OCI-LY7 (cell line): ENCODE measurements at regions of chr17 and their contacts with region 1.

Region 1: GRCh38 chr17:38735161-38735997 is 5.2 kb downstream of the CISD3 start:
- DNase-seq: peak; percentile 67
- H3K4me3 ChIP-seq: no peak overlapping the region
- H3K27ac ChIP-seq: no peak overlapping the region
- H3K4me1 ChIP-seq: peaks cover 48% of the 10 kb centered on the region
- CTCF ChIP-seq: peak; percentile 91

Region 2: DNA sequence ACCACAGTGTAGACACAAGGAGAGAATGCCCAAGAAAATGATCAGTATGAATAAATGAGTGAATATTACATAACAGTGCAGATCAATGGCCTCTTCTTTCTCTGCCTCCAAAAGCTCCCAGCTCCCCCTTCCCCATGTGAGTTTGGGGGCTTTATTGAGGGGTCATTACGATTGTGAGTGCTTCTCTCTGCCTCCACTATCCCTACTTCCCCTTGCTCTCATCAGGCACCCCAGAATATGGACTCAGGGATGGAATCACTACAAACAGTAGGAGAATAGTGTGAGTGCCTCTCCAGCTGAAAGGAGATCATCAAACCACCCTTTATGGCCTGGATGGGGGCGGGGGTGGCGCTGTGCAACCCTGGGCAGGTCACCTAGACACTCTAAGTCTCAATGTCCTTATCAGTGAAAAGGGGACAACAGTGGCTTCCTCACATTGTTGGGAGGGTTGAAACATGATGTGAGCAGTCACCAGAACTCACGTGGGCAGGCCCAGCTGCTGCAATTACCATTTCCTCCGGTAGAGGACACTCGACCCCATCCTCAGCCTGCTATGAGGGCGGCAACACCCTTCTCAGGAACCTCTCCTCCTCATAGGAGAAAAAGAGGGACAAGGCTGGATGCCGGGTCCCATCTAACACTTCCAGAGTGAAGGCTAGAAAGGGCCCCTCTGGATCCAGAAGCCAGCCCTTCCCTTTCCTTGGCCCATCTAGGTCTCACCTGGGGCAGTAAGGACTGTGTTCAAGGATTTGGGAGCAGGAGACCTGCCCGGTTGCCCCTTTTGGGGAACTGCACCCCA is 58.5 kb before region 1 on chr17:
- CTCF ChIA-PET with region 1: interaction called, 12 read pairs
- POLR2A ChIA-PET with region 1: no interaction called
- intact Hi-C with region 1: loop called (anchors 1 kb)
- DNase-seq: peak; percentile 84
- H3K4me3 ChIP-seq: no peak overlapping the region
- H3K27ac ChIP-seq: peak overlapping the region; percentile 17
- H3K4me1 ChIP-seq: peaks cover 37% of the 10 kb centered on the region
- CTCF ChIP-seq: peak; percentile 98